B cell (primary cell): ENCODE measurements at regions of chr3 and their contacts with region 1.

Region 1: DNA sequence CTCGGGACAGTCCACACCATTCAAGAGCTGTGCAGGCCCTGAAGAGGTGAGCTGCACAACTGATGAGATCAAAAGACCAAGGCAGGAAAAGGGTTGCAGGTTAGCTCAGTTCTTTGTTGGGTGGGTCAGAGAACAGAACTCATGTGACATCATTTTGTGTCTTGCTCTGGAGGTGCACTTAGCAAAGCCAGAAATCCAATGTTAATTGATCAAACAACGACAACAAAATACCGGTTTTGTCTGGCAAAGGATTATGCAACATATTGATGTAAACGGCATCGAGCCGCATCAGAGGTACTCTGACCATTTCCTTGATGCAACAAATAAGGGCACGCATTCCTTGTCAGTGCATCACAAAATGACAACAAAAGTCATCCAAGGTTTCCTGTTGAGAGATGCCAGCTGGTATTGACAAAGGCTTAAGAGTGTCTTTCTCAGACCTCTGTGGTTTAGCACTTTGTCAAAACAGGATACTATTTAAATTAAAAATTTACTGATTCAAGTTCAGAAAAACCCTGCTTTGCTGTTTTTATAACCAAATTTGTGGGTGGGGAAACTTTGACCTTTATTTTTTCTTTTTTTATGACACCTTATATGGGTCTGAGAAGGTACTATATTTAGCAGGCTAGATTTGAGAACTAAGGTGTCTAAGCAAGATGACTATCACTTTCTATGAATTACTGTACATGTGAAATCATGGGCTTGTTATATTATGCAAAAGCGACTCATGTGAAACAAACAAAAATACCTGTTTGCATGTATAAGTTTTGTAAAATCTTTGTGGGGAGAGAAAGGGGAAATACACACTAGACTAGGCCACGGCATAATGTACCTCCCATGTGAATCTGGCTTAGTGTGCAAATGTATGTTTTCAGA is 496.1 kb downstream of the FOXP1 start:
- DNase-seq: peak; percentile 82
- ATAC-seq: peak; percentile 67
- H3K4me3 ChIP-seq: peak overlapping the region in 1 of 5 experiments; percentile 39
- H3K4me3 Mint-ChIP-seq: peak overlapping the region; percentile 72
- H3K27ac ChIP-seq: peak overlapping the region; percentile 87 to 91
- H3K27ac Mint-ChIP-seq: peak overlapping the region; percentile 88
- H3K4me1 ChIP-seq: peaks cover 88 to 93% of the 10 kb centered on the region in 2 donors
- H3K4me1 Mint-ChIP-seq: peaks cover 86% of the 10 kb centered on the region
- H3K27me3 ChIP-seq: no peaks in the 10 kb centered on the region
- H3K27me3 Mint-ChIP-seq: no peaks in the 10 kb centered on the region
- CTCF ChIP-seq: no peak

Region 2: GRCh38 chr3:71031914-71032521 is 55.4 kb before region 1 on chr3:
- CTCF ChIA-PET with region 1: no interaction called
- POLR2A ChIA-PET with region 1: no interaction called
- intact Hi-C with region 1: loop called (anchors 1 kb)
- DNase-seq: peak; percentile 92
- ATAC-seq: peak; percentile 94
- H3K4me3 ChIP-seq: peak overlapping the region in 2 of 5 experiments; percentile 10 to 31
- H3K4me3 Mint-ChIP-seq: peak overlapping the region; percentile 69
- H3K27ac ChIP-seq: peak overlapping the region; percentile 89 to 91
- H3K27ac Mint-ChIP-seq: peak overlapping the region; percentile 96
- H3K4me1 ChIP-seq: peaks cover 69 to 74% of the 10 kb centered on the region in 2 donors
- H3K4me1 Mint-ChIP-seq: peaks cover 90% of the 10 kb centered on the region
- H3K27me3 ChIP-seq: no peaks in the 10 kb centered on the region
- H3K27me3 Mint-ChIP-seq: no peaks in the 10 kb centered on the region
- CTCF ChIP-seq: no peak

Region 3: GRCh38 chr3:71069797-71070196 is 17.6 kb before region 1 on chr3:
- CTCF ChIA-PET with region 1: interaction called, 19 read pairs
- POLR2A ChIA-PET with region 1: interaction called, 5 read pairs
- intact Hi-C with region 1: loop called (anchors 1 kb)
- DNase-seq: peak; percentile 83
- ATAC-seq: peak; percentile 48
- H3K4me3 ChIP-seq: no peak overlapping the region
- H3K4me3 Mint-ChIP-seq: peak overlapping the region; percentile 69
- H3K27ac ChIP-seq: peak overlapping the region; percentile 25 to 77
- H3K27ac Mint-ChIP-seq: peak overlapping the region; percentile 84
- H3K4me1 ChIP-seq: peaks cover 55 to 67% of the 10 kb centered on the region in 2 donors
- H3K4me1 Mint-ChIP-seq: peaks cover 79% of the 10 kb centered on the region
- H3K27me3 ChIP-seq: no peaks in the 10 kb centered on the region
- H3K27me3 Mint-ChIP-seq: no peaks in the 10 kb centered on the region
- CTCF ChIP-seq: peak; percentile 78

Region 4: DNA sequence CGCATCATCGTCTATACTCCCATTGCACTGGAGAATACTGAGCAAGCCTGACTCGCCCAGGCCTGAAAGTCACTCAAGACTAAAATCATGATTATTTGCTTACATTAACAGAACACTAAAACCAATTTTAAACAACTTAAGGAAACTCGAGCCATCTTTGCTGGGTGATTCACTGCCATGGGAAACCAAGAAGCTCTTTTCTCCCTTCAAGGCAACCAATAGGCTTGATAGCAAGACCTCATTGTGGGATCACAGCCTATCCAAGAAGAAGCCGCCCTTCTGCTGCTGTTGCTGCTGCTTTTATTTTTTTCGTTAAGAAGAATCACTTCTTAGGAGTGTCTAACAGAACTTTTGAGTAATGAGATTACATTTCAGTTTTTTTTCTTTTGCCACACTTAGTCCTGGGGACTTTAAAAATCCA is 16.8 kb after region 1 on chr3:
- CTCF ChIA-PET with region 1: interaction called, 9 read pairs
- POLR2A ChIA-PET with region 1: interaction called, 3 read pairs
- intact Hi-C with region 1: loop called (anchors 1 kb)
- DNase-seq: no peak
- ATAC-seq: no peak
- H3K4me3 ChIP-seq: no peak overlapping the region
- H3K4me3 Mint-ChIP-seq: no peak overlapping the region
- H3K27ac ChIP-seq: peak overlapping the region in 1 of 2 donors; percentile 51
- H3K27ac Mint-ChIP-seq: peak overlapping the region; percentile 3
- H3K4me1 ChIP-seq: peaks cover 24 to 28% of the 10 kb centered on the region in 2 donors
- H3K4me1 Mint-ChIP-seq: peaks cover 86% of the 10 kb centered on the region
- H3K27me3 ChIP-seq: no peaks in the 10 kb centered on the region
- H3K27me3 Mint-ChIP-seq: no peaks in the 10 kb centered on the region
- CTCF ChIP-seq: no peak

Region 5: DNA sequence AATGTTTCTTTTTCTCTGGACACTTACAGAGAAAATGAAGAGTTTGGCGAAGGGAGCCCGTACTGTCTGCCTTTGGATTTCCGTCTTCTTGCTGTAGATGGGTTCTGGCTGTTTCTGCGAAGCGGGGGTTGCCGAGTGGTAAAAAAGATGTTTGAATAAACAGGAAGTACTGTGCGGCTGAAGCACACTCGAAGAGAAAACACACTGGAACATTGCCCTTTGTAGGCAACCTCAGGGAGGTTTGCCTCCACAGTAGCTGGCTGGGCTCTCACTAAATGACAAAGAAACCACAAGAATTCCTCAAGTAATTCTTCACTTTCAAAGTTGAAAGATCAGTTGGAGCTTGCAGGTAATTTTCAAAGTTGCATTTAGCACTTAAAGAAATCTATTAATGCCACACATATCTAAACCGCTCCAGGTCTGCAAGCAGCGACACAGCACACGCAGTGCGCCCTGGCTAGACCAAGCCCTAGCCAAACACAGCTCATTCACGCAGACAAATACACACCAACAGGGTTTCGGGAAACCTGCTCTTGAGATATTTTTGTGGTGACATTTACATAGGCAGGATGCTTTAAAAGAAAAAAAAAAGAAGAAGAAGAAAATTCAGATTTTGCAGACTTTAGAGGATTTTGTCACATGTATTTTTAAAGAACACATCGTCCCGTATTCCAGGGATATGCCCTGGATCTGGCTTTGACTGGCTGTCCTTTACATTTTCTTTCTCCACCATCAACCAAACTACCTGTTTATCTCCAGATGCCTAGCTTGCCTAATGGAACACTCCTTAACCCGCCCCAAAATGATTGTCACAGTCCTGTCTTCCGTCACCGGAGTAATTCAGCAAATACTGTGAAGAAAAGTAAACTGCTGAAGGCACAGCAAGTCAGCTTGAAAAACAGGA is 43.3 kb after region 1 on chr3:
- CTCF ChIA-PET with region 1: interaction called, 7 read pairs
- POLR2A ChIA-PET with region 1: interaction called, 12 read pairs
- intact Hi-C with region 1: loop called (anchors 1 kb)
- DNase-seq: peak; percentile 81
- ATAC-seq: peak; percentile 76
- H3K4me3 ChIP-seq: peak overlapping the region; percentile 53 to 91 (median 71)
- H3K4me3 Mint-ChIP-seq: peak overlapping the region; percentile 93
- H3K27ac ChIP-seq: peak overlapping the region; percentile 72 to 91
- H3K27ac Mint-ChIP-seq: peak overlapping the region; percentile 94
- H3K4me1 ChIP-seq: peaks cover 51 to 64% of the 10 kb centered on the region in 2 donors
- H3K4me1 Mint-ChIP-seq: peaks cover 68% of the 10 kb centered on the region
- H3K27me3 ChIP-seq: no peaks in the 10 kb centered on the region
- H3K27me3 Mint-ChIP-seq: no peaks in the 10 kb centered on the region
- CTCF ChIP-seq: no peak

Region 6: GRCh38 chr3:71149959-71150954 is 62.9 kb after region 1 on chr3:
- CTCF ChIA-PET with region 1: no interaction called
- POLR2A ChIA-PET with region 1: no interaction called
- intact Hi-C with region 1: no loop called
- DNase-seq: no peak
- ATAC-seq: no peak
- H3K4me3 ChIP-seq: no peak overlapping the region
- H3K4me3 Mint-ChIP-seq: peak overlapping the region; percentile 4
- H3K27ac ChIP-seq: peak overlapping the region in 1 of 2 donors; percentile 33
- H3K27ac Mint-ChIP-seq: peak overlapping the region; percentile 65
- H3K4me1 ChIP-seq: no peaks in the 10 kb centered on the region
- H3K4me1 Mint-ChIP-seq: peaks cover 23% of the 10 kb centered on the region
- H3K27me3 ChIP-seq: no peaks in the 10 kb centered on the region
- H3K27me3 Mint-ChIP-seq: no peaks in the 10 kb centered on the region
- CTCF ChIP-seq: no peak

Region 7: DNA sequence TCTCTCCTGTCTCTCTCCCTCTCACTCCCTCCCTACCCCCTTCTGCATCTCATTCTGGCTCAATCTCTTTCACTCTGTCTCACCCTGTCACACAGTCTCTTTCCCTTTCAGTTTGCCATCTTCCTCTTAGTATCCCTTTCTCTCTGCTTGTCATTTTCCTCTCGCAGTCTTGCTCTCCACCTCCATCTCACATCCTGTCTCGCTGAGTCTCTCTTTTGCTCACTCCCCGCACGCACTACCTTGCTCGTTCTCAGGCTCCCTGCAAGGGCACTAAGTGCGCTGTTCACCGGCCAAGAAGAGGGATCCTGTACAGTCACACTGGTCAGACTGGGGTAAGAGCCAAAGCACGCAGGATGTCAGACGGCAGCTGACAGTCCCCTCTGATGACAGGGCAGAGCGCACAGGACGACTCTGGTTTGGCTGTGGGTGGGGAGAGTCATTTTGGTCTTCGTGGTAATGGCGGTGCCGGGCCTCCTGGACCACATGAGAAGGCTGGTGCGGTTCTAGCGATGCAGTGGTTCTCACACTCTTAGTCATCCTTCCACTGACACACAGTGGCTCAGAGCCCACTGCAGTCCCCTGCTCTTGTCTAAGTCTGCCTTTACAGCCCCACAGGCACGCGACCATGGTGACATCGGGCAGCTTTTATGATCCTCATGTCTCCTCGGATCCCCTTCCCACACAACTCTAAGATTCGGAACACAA is 139.3 kb after region 1 on chr3:
- CTCF ChIA-PET with region 1: no interaction called
- POLR2A ChIA-PET with region 1: no interaction called
- intact Hi-C with region 1: loop called (anchors 5 kb)
- DNase-seq: peak; percentile 60
- ATAC-seq: peak; percentile 69
- H3K4me3 ChIP-seq: peak overlapping the region in 4 of 5 experiments; percentile 19 to 52 (median 40)
- H3K4me3 Mint-ChIP-seq: peak overlapping the region; percentile 91
- H3K27ac ChIP-seq: peak overlapping the region; percentile 67 to 93
- H3K27ac Mint-ChIP-seq: peak overlapping the region; percentile 90
- H3K4me1 ChIP-seq: peaks cover 32 to 34% of the 10 kb centered on the region in 2 donors
- H3K4me1 Mint-ChIP-seq: peaks cover 64% of the 10 kb centered on the region
- H3K27me3 ChIP-seq: no peaks in the 10 kb centered on the region
- H3K27me3 Mint-ChIP-seq: no peaks in the 10 kb centered on the region
- CTCF ChIP-seq: no peak

Region 8: DNA sequence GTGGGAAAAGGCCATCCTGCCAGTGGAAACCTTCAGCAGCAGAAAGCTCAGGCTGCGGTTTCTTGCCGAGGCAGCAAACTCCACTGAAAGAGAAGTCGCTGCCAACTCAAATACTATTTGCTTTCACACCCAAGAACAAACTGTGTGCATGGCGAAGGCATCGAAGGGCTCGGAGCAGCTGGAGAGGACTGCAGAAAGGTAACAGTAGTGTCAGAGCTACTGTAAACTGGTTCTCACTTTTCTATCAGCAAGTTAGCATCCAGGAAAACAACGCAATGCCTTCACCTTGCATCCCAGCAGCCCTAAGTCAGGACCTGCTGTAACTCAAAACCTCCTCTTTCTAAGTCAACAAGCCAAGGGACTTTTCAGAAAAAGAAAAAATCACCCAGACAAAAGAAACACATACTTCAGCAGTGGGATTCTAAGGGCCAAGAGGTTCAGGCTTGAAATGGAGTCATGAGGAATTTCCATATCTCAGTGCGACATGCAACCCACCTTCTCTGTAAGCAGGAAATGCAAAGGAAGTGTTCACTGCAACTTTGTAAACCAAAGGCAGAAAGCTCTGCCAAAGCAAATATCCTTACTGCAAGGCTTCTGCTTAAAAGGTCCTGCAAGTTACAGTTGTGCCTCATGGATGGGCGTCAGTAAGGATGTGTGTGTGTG is 302.7 kb after region 1 on chr3:
- CTCF ChIA-PET with region 1: interaction called, 3 read pairs
- POLR2A ChIA-PET with region 1: interaction called, 5 read pairs
- intact Hi-C with region 1: loop called (anchors 1 kb)
- DNase-seq: peak; percentile 57
- ATAC-seq: peak; percentile 11
- H3K4me3 ChIP-seq: peak overlapping the region; percentile 27 to 40 (median 33)
- H3K4me3 Mint-ChIP-seq: peak overlapping the region; percentile 84
- H3K27ac ChIP-seq: peak overlapping the region; percentile 95 to 99
- H3K27ac Mint-ChIP-seq: peak overlapping the region; percentile 98
- H3K4me1 ChIP-seq: peaks cover 84 to 90% of the 10 kb centered on the region in 2 donors
- H3K4me1 Mint-ChIP-seq: peaks cover 70% of the 10 kb centered on the region
- H3K27me3 ChIP-seq: no peaks in the 10 kb centered on the region
- H3K27me3 Mint-ChIP-seq: no peaks in the 10 kb centered on the region
- CTCF ChIP-seq: no peak